ENCODE measurements at regions of chr3 and their contacts with region 1.

Region 1: DNA sequence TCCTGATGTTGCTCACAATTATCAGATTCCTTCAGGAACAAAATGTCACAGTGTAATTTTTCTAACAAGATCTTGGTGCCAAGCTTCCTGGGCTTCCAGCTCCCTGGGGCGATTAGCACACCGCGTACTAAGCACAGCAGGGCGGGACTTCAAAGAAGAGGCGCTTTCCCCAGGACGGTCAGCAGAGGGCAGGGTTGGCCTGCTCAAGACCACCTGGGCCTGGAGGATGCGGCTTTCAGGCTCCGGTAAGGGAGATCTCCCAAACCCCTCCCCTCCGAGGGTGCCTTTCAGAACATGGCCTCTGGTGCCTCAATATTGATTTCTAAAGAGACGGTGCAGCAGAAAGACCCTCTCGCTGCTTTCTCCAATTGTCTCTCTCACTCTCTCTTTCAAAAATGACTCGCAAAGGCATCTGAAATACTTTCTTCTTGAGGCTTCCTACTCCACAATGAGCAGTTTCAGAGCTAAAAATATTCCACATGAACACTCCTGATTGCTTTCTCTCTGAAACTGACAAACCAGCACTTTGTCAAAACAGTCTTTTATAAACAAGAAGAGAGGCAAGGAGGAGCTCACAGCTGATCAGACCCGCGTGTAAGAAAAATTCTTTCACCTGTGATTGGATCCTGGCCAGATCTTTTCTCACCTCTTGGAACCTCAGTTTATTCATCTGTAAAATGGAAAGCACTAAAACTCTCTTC is 154.0 kb downstream of the ADAMTS9 start:
- DNase-seq: peak; percentile 86
- H3K4me3 ChIP-seq: no peak overlapping the region
- H3K27ac ChIP-seq: peak overlapping the region; percentile 4
- H3K4me1 ChIP-seq: no peaks in the 10 kb centered on the region
- H3K27me3 ChIP-seq: no peaks in the 10 kb centered on the region
- CTCF ChIP-seq: peak; percentile 90
- POLR2A ChIP-seq: no peak

Region 2: DNA sequence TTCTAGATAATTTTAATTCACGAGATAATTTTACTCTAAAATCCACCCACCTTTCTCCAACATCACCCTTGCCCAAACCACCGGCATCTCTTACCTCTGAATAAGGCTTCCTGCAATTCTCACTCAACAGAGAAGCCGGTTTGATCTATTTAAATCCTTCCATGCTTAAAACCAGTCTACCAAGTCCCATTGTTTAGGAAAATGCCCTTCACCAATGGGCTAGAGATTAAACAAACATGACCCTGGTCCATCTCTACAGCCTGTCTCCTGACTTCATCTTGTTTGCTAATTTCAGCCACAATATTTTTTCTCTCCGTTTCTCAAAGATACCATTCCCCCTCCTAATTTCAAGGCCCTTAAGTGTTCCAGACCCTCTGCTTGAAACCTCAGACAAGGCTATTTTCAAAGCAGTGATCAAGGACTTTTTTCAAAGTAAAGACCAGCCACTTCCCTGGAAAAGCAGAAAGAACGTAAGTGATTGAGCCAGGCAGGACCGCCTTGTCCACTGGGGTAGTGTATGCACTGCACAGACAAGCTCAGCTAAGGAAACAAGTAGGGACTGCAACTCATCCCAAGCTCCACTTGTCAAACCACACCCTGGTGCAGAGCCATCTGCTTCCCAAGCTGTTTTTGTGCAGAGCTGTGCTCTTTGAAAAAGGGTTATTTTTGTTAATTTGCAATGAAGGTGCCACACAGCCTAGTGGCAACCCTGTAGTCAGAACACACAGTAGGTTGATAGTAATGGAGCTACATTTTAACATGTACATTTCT is 39.4 kb before region 1 on chr3:
- CTCF ChIA-PET with region 1: no interaction called
- POLR2A ChIA-PET with region 1: no interaction called
- dilution Hi-C with region 1: no loop called
- intact Hi-C with region 1: no loop called
- DNase-seq: no peak
- H3K4me3 ChIP-seq: no peak overlapping the region
- H3K27ac ChIP-seq: no peak overlapping the region
- H3K4me1 ChIP-seq: no peaks in the 10 kb centered on the region
- H3K27me3 ChIP-seq: peaks cover 50 to 53% of the 10 kb centered on the region in 2 experiments
- CTCF ChIP-seq: no peak
- POLR2A ChIP-seq: no peak

Region 3: DNA sequence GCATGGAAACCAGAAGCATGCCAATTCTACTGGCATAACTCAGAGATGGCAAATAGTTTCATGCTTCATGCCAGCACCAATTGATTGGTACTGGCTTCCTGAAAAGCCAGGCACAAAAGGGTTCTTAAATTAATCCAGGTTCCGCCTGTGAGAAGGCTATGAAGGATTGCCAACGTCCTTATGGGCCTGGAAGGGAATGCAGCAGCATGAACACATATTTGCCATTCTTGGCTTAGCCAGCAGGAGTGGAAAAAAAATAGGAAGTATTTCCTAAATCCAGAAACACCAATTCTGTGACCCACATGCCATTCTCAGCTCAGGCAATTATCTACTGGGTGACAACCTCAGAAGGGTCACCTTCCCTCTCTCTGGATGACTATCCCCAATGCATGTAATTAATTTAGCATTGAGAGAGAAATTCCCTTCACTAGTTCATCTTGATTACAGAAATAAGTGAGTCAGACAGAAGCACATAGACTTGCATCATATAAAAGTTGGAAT is 118.0 kb after region 1 on chr3:
- CTCF ChIA-PET with region 1: interaction called, 10 read pairs
- POLR2A ChIA-PET with region 1: no interaction called
- dilution Hi-C with region 1: no loop called
- intact Hi-C with region 1: no loop called
- DNase-seq: peak; percentile 14
- H3K4me3 ChIP-seq: no peak overlapping the region
- H3K27ac ChIP-seq: no peak overlapping the region
- H3K4me1 ChIP-seq: peaks cover 22% of the 10 kb centered on the region
- H3K27me3 ChIP-seq: no peaks in the 10 kb centered on the region
- CTCF ChIP-seq: no peak
- POLR2A ChIP-seq: no peak

Region 4: DNA sequence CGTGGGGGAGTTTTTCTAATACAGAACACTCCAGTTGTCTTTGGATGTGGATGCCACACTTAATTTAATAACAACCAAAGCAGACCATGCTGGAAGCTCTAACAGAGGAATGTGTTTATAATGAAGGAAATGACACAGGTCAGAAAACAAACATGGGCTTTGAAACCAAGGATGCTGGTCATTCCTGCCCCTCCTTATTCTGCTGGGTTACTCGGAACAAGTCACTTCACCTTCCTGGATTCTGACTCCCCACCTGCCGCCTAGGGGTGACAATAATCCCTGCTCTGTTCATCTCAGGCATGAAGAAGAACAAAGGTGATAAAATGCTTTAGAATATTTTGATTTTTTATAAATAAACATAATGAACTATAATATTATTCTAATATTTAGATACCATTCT is 394.9 kb after region 1 on chr3:
- CTCF ChIA-PET with region 1: no interaction called
- POLR2A ChIA-PET with region 1: no interaction called
- dilution Hi-C with region 1: no loop called
- intact Hi-C with region 1: loop called (anchors 10 kb)
- DNase-seq: peak; percentile 93
- H3K4me3 ChIP-seq: no peak overlapping the region
- H3K27ac ChIP-seq: peak overlapping the region; percentile 54
- H3K4me1 ChIP-seq: peaks cover 16% of the 10 kb centered on the region
- H3K27me3 ChIP-seq: no peaks in the 10 kb centered on the region
- CTCF ChIP-seq: peak; percentile 8 to 27
- POLR2A ChIP-seq: no peak

Region 5: GRCh38 chr3:65245133-65246063 is 711.6 kb after region 1 on chr3:
- CTCF ChIA-PET with region 1: interaction called, 56 read pairs
- POLR2A ChIA-PET with region 1: no interaction called
- dilution Hi-C with region 1: loop called (anchors 10 kb)
- intact Hi-C with region 1: loop called (anchors 1 kb)
- DNase-seq: peak; percentile 59
- H3K4me3 ChIP-seq: no peak overlapping the region
- H3K27ac ChIP-seq: no peak overlapping the region
- H3K4me1 ChIP-seq: no peaks in the 10 kb centered on the region
- H3K27me3 ChIP-seq: no peaks in the 10 kb centered on the region
- CTCF ChIP-seq: peak; percentile 26 to 33
- POLR2A ChIP-seq: no peak

Region 6: DNA sequence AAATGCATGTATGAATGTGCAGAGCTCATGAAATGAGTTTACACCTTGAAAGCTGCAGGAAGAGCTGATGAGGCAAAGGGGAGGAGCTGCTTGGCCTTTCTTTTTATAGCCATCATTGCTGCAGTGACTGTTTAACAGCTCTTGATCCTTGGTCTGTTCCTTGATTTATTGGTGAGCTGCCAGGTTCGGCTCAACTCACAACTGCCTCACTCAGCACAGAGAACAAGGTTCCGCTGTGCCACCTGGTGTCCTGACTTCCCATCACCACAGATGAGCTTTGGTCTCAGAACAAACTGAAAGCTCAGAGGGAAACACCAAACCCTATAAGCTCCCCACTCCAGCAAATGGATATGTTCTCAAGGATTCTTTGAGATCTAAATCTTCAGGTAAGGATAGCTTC is 878.8 kb after region 1 on chr3:
- CTCF ChIA-PET with region 1: interaction called, 4 read pairs
- POLR2A ChIA-PET with region 1: no interaction called
- dilution Hi-C with region 1: no loop called
- intact Hi-C with region 1: loop called (anchors 5 kb)
- DNase-seq: peak; percentile 18
- H3K4me3 ChIP-seq: no peak overlapping the region
- H3K27ac ChIP-seq: no peak overlapping the region
- H3K4me1 ChIP-seq: peaks cover 28% of the 10 kb centered on the region
- H3K27me3 ChIP-seq: no peaks in the 10 kb centered on the region
- CTCF ChIP-seq: no peak
- POLR2A ChIP-seq: no peak

Region 7: DNA sequence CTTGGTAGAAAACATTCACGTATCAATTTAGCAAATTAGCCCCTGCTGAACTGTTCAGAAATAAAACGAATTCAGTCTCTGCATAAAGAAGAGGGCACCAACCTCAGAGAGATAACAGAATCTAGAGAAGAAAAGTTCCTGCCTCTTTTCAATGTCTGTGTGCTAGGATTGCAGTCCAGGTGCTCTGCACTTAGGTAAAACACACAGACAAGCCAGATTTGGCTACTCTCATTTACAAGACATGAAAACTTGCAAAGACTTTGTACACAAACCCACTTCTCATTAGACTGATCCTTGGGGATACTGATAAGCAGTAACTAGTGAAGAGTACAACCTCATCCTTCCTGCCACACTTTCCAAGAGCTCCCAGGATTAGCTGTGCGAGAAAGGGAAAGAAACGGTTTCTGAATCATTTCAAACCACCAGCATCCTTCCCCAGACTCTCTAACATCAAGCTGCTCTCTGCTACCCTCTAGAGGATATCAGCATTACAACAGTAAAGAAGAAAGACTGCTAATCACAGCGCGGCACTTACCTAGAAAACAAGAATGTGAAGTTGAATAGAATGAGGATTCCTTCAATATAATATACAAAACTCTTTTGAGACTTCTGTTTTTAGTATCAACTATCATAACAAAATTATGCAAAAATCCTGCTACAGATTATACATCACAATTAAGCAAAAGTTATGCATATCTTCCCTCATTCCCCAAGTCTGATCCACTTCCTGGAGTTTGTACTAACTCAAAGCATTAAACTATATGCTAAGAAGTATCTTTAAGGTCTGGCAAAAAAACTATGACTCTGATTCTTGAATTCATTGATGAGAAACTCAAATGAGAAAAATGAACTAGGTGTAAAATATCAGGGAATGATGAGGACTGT is 1198.5 kb after region 1 on chr3:
- CTCF ChIA-PET with region 1: interaction called, 8 read pairs
- POLR2A ChIA-PET with region 1: no interaction called
- dilution Hi-C with region 1: no loop called
- intact Hi-C with region 1: loop called (anchors 5 kb)
- DNase-seq: peak; percentile 73
- H3K4me3 ChIP-seq: no peak overlapping the region
- H3K27ac ChIP-seq: no peak overlapping the region
- H3K4me1 ChIP-seq: no peaks in the 10 kb centered on the region
- H3K27me3 ChIP-seq: no peaks in the 10 kb centered on the region
- CTCF ChIP-seq: peak; percentile 71 to 74
- POLR2A ChIP-seq: no peak

Measured in endothelial cell of umbilical vein (primary cell).